ENCODE measurements at regions of chr11 and their contacts with region 1.

Region 1: GRCh38 chr11:62726915-62727763 is at the start of gene HNRNPUL2:
- DNase-seq: peak; percentile 100
- H3K4me3 Mint-ChIP-seq: peak within 1 kb of the TSS; percentile 99
- H3K27ac Mint-ChIP-seq: peak within 1 kb of the TSS; percentile 96
- H3K4me1 Mint-ChIP-seq: peaks cover 31% of the 10 kb centered on the region
- H3K27me3 Mint-ChIP-seq: no peaks in the 10 kb centered on the region
- total RNA-seq, gene HNRNPUL2: 62.6 and 63.5 TPM in 2 replicates

Region 2: GRCh38 chr11:62652161-62653006 is 74.8 kb before region 1 on chr11:
- intact Hi-C with region 1: loop called (anchors 5 kb)
- DNase-seq: no peak
- H3K4me3 Mint-ChIP-seq: peak overlapping the region; percentile 98
- H3K27ac Mint-ChIP-seq: peak overlapping the region; percentile 92
- H3K4me1 Mint-ChIP-seq: peaks cover 10% of the 10 kb centered on the region
- H3K27me3 Mint-ChIP-seq: no peaks in the 10 kb centered on the region

Region 3: DNA sequence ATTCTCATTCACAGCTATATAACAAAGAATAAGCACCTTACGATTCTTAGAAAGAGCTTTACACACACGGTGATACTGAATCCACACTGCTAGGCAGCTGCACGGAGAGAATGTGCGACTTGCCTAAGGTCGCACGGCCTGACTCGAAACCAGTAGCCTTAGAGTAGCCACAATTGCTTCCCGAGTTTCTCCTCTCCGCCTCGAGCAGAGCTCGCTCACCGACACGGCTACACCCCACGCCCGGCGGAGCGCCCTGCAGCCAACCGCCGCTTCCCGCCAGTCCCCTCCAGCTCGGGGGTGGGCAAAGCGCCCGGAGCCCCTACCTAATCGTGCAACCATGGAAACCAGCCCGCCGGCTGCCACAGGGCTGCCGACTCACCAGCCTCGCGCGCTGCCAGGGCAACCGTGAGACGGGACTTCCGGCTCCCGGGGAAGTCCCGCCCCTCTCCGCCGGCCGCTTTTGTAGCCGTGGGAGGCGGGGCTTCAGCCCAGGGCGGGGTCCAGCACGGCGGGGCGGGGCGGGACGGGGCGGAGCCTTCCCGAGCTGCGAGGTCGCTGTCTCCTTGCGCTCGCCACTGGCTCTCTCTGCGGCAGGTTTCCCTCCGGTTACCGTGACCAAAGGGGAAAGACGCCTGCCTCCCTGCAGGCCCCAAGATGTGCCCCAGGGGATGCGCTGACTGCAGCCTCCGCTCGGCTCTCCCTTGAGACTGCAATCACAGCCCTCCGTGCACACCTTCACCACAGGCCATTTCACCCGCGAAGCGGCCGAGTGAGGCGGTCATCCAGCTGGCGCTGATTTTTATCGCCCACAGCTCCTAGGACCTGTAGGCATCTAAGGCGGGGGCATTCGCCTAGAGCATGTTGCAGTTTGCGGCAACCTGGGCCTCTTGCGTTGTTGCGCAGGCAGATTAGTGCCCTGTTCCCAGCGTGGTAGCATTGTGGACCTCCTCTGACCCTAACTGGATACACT is 21.0 kb before region 1 on chr11:
- intact Hi-C with region 1: loop called (anchors 1 kb)
- DNase-seq: peak; percentile 89
- H3K4me3 Mint-ChIP-seq: peak overlapping the region; percentile 90
- H3K27ac Mint-ChIP-seq: peak overlapping the region; percentile 57
- H3K4me1 Mint-ChIP-seq: peaks cover 37% of the 10 kb centered on the region
- H3K27me3 Mint-ChIP-seq: no peaks in the 10 kb centered on the region

Region 4: DNA sequence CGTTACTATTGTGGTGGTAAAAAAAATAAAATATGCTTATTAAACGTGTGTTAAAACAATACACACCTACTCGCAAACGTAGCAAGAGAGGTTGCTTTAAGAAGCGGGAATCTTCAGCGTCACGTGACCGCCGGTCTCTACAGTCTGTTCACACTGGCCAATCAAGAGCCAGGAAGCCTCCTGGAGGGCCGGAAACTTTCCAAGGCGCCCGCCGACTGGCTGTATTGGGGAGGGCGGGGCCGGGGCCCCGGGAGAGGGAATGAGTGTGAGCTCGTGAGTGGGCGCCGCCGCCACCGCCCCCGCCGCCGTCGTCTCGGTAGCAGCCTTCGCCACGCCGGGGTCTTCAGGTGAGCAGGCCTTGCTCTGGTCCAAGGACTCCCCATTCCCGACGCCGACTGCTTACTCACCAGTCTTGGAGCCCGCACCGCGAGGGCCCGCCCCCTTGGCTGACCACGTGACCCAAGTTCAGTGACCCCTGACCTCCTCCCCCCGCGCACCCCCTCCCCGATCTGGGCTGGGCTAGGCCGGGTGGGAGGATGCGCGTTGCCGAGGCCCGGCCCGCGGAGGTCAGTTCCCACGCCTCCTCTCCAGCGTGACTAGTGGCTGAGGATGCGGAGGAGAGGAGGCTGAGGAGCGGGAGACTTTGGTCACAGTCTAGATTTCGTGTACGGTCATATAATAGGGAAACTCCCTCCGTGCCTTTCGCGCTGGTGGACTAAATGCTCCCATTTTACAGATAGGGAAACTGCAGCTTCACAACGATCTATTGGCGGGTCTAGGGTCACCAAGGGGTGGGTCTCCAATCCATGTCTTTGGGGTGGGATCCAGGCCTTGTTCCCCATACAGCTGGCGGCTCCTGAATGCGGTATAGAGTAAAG is 44.2 kb after region 1 on chr11 and contains the start of gene TAF6L:
- intact Hi-C with region 1: loop called (anchors 1 kb)
- DNase-seq: peak; percentile 92
- H3K4me3 Mint-ChIP-seq: peak within 1 kb of the TSS; percentile 88
- H3K27ac Mint-ChIP-seq: peak within 1 kb of the TSS; percentile 92
- H3K4me1 Mint-ChIP-seq: peaks cover 13% of the 10 kb centered on the region
- H3K27me3 Mint-ChIP-seq: no peaks in the 10 kb centered on the region
- total RNA-seq, gene TAF6L: 17.6 and 21.0 TPM in 2 replicates

Region 5: GRCh38 chr11:62805076-62805892 is 78.1 kb after region 1 on chr11 and contains the start of gene NXF1:
- intact Hi-C with region 1: no loop called
- DNase-seq: peak; percentile 95
- H3K4me3 Mint-ChIP-seq: peak within 1 kb of the TSS; percentile 98
- H3K27ac Mint-ChIP-seq: peak within 1 kb of the TSS; percentile 94
- H3K4me1 Mint-ChIP-seq: peaks cover 30% of the 10 kb centered on the region
- H3K27me3 Mint-ChIP-seq: no peaks in the 10 kb centered on the region
- total RNA-seq, gene NXF1: 134 and 139 TPM in 2 replicates

Region 6: GRCh38 chr11:62841361-62842184 is 114.4 kb after region 1 on chr11:
- intact Hi-C with region 1: loop called (anchors 1 kb)
- DNase-seq: peak; percentile 83
- H3K4me3 Mint-ChIP-seq: no peak overlapping the region
- H3K27ac Mint-ChIP-seq: no peak overlapping the region
- H3K4me1 Mint-ChIP-seq: peaks cover 16% of the 10 kb centered on the region
- H3K27me3 Mint-ChIP-seq: no peaks in the 10 kb centered on the region

Region 7: GRCh38 chr11:62880803-62881578 is 153.9 kb after region 1 on chr11 and contains the start of gene SLC3A2:
- intact Hi-C with region 1: loop called (anchors 2 kb)
- DNase-seq: peak; percentile 85
- H3K4me3 Mint-ChIP-seq: peak within 1 kb of the TSS; percentile 100
- H3K27ac Mint-ChIP-seq: peak within 1 kb of the TSS; percentile 100
- H3K4me1 Mint-ChIP-seq: peaks cover 55% of the 10 kb centered on the region
- H3K27me3 Mint-ChIP-seq: no peaks in the 10 kb centered on the region
- total RNA-seq, gene SLC3A2: 245 and 286 TPM in 2 replicates

Measured in activated T-helper 2 cell treated with anti-CD3 and anti-CD28 coated beads, Interferon-gamma antibody, Interleukin-2, Interleukin-4, amounts not matched to agents 10 μg/mL and 5 μg/mL and 100 μg/mL, durations not matched to agents 14 hours and 24 hours and 36 hours (primary cell).